IMR-90 (cell line): ENCODE measurements at regions of chr4 and their contacts with region 1.

Region 1: GRCh38 chr4:70315928-70316327 is 18.9 kb upstream of the CABS1 start:
- DNase-seq: no peak
- ATAC-seq: no peak
- H3K4me3 ChIP-seq: no peak overlapping the region
- H3K27ac ChIP-seq: no peak overlapping the region
- H3K4me1 ChIP-seq: no peaks in the 10 kb centered on the region
- H3K27me3 ChIP-seq: no peaks in the 10 kb centered on the region
- CTCF ChIP-seq: no peak
- POLR2A ChIP-seq: no peak
- RAD21 ChIP-seq: no peak

Region 2: GRCh38 chr4:69823481-69824186 is 492.3 kb before region 1 on chr4:
- CTCF ChIA-PET with region 1: no interaction called
- POLR2A ChIA-PET with region 1: no interaction called
- dilution Hi-C with region 1: no loop called
- in situ Hi-C with region 1: no loop called
- intact Hi-C with region 1: no loop called
- DNase-seq: peak; percentile 6
- ATAC-seq: no peak
- H3K4me3 ChIP-seq: no peak overlapping the region
- H3K27ac ChIP-seq: no peak overlapping the region
- H3K4me1 ChIP-seq: no peaks in the 10 kb centered on the region
- H3K27me3 ChIP-seq: no peaks in the 10 kb centered on the region
- CTCF ChIP-seq: peak; percentile 24; the same call in 1 of the 2 replicates
- POLR2A ChIP-seq: no peak
- RAD21 ChIP-seq: peak; percentile 22; the same call in 1 of the 2 replicates

Region 3: GRCh38 chr4:69896530-69897116 is 419.3 kb before region 1 on chr4:
- CTCF ChIA-PET with region 1: no interaction called
- POLR2A ChIA-PET with region 1: no interaction called
- dilution Hi-C with region 1: no loop called
- in situ Hi-C with region 1: no loop called
- intact Hi-C with region 1: no loop called
- DNase-seq: peak; percentile 3
- ATAC-seq: peak; percentile 49; the same call in 1 of the 2 replicates
- H3K4me3 ChIP-seq: no peak overlapping the region
- H3K27ac ChIP-seq: no peak overlapping the region
- H3K4me1 ChIP-seq: no peaks in the 10 kb centered on the region
- H3K27me3 ChIP-seq: no peaks in the 10 kb centered on the region
- CTCF ChIP-seq: peak; percentile 38
- POLR2A ChIP-seq: no peak
- RAD21 ChIP-seq: peak; percentile 29; the same call in 1 of the 2 replicates

Region 4: DNA sequence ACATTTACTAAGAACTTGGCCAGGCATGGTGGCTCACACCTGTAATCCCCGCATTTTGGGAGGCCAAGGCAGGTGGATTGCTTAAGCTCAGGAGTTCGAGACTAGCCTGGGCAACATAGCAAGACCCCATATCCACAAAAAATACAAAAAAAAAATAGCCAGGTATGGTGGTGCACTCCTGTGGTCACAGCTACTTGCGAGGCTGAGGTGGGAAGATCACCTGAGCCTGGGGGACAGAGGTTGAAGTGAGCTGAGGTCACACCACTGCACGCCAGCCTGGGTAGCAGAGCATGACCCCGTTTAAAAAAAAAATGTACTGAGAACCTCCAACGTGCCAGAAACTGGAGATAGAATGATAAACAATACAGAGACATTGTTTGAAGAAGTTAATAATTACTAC is 89.8 kb after region 1 on chr4:
- CTCF ChIA-PET with region 1: no interaction called
- POLR2A ChIA-PET with region 1: no interaction called
- dilution Hi-C with region 1: no loop called
- in situ Hi-C with region 1: no loop called
- intact Hi-C with region 1: no loop called
- DNase-seq: no peak
- ATAC-seq: no peak
- H3K4me3 ChIP-seq: no peak overlapping the region
- H3K27ac ChIP-seq: no peak overlapping the region
- H3K4me1 ChIP-seq: no peaks in the 10 kb centered on the region
- H3K27me3 ChIP-seq: no peaks in the 10 kb centered on the region
- CTCF ChIP-seq: no peak
- POLR2A ChIP-seq: no peak
- RAD21 ChIP-seq: no peak

Region 5: GRCh38 chr4:70505151-70505748 is 189.3 kb after region 1 on chr4:
- CTCF ChIA-PET with region 1: no interaction called
- POLR2A ChIA-PET with region 1: no interaction called
- dilution Hi-C with region 1: no loop called
- in situ Hi-C with region 1: no loop called
- intact Hi-C with region 1: loop called (anchors 1 kb)
- DNase-seq: peak; percentile 39
- ATAC-seq: peak; percentile 95
- H3K4me3 ChIP-seq: no peak overlapping the region
- H3K27ac ChIP-seq: no peak overlapping the region
- H3K4me1 ChIP-seq: no peaks in the 10 kb centered on the region
- H3K27me3 ChIP-seq: no peaks in the 10 kb centered on the region
- CTCF ChIP-seq: peak; percentile 82
- POLR2A ChIP-seq: 0 out of 2 replicates have a peak, but pooled peaks have one; percentile 21
- RAD21 ChIP-seq: peak; percentile 83